ENCODE measurements at regions of chr2 and their contacts with region 1.

Region 1: GRCh38 chr2:193539188-193539587 is 1344.5 kb upstream of the TMEFF2 start:
- DNase-seq: no peak
- ATAC-seq: no peak

Region 2: GRCh38 chr2:193315428-193316091 is 223.6 kb before region 1 on chr2:
- intact Hi-C with region 1: no loop called
- DNase-seq: no peak
- ATAC-seq: no peak

Region 3: GRCh38 chr2:193428336-193428818 is 110.8 kb before region 1 on chr2:
- intact Hi-C with region 1: no loop called
- DNase-seq: no peak
- ATAC-seq: no peak

Region 4: DNA sequence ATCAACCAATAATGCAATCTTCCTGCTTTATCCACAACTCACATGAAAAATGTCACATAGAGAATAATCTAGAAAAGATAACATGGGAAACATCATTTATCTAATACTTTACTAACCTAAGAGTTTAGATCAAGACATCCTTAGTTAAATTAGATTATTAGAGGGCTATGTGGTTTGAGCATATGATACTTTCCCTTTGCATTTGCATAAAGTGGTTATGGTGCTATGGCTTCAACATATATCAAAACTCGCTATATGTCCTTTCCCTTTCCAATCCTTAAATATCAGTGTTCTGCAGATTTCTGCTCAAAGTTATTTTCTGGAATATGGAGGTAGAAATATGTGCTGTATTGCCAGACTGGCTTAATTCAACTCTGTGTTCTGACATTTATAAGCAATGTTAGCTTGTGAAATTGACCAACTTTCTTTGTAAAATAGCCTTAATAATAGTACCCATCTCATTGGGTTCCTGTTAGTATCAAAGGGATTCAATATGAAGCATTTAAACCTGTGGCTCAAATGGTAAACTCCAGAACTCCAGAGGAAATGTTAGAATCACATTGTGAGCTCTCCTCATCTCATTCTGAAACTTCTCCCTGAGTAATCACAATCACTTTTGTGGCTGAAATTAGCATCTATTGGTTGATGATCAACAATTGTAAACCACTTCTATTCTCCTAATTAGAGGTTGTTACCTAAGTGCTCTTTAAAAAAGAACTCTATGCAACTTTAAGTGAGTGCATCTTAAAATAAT is 1027.9 kb after region 1 on chr2:
- intact Hi-C with region 1: loop called (anchors 5 kb)
- DNase-seq: no peak
- ATAC-seq: no peak